Left cardiac atrium (tissue), 4 donors: ENCODE measurements at regions of chr6 and their contacts with region 1.

Region 1: GRCh38 chr6:87407901-87408720 is at the start of gene CFAP206:
- DNase-seq: peak; percentile 89
- ATAC-seq: peak; percentile 97
- total RNA-seq, gene CFAP206: 0.18 to 0.42 TPM

Region 2: DNA sequence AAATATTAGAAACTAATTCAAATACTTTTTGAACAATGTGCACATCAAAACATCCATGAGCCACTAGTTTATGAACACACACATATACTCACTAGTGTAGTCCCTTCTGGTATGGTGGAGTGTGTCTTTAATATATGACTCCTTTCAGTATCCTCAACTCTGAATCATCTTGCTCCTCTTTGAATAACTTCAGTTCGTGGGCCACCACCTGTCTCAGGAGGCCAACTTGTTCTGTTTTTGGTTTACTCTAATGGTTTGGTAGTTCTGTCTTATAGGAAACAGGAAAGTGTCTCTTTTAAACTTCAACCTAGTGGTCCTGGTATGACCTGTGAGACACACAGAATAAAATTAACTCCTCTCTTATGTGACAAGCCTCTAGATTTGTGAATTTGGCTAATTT is 197.1 kb before region 1 on chr6:
- intact Hi-C with region 1: no loop called
- DNase-seq: no peak
- ATAC-seq: no peak

Region 3: DNA sequence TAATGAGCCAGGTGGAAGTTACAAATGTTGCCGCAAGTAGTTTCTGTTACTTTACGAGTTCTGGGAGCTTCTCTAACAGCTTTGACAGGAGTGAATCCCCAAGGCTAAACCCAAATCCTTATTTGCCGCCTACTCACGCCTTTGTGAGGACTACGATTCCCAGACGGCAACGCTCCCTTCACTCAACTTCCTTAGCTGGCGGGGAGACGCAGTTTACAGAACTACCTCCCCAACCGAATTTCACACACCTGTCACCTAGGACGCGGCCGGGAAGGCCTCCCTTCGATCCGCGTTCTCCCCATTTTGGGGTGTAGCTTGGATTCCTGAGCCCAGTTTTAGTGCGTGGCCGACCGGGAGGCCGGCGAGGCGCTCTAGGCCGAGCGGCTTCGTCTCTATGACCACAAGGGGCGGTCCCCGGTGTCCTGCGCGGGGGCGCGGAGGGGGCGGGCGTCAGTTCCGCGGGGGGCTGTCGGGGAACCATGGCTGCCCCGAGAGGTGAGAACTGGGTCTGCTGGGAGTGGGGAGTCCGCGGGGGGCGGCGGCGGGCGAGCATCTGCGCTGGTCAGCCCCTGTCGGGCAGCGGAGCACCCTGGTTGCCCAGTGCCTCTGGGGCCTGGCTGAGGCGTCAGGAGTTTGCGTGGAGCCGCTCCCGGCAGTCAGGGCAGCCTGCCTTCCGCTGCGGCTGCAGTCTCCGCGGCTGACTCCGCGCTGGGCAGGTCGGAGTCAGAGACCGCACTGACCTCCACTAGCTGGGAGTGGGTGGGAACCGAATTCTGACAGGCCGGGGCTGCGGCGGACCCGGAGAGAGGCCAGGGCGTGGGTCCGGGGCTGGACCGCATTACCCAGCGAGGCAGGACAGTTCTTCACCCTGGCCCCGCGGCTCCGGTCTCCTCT is 64.7 kb after region 1 on chr6 and contains the start of gene SLC35A1:
- intact Hi-C with region 1: loop called in 1 of 2 experiments (anchors 1 kb)
- DNase-seq: peak; percentile 90
- ATAC-seq: peak; percentile 98 to 99
- total RNA-seq, gene SLC35A1: 11.5 to 12.6 TPM

Region 4: GRCh38 chr6:87504441-87504840 is 96.3 kb after region 1 on chr6:
- intact Hi-C with region 1: no loop called
- DNase-seq: no peak
- ATAC-seq: peak; percentile 58 to 68